MCF 10A (cell line): ENCODE measurements at regions of chr7 and their contacts with region 1.

Region 1: DNA sequence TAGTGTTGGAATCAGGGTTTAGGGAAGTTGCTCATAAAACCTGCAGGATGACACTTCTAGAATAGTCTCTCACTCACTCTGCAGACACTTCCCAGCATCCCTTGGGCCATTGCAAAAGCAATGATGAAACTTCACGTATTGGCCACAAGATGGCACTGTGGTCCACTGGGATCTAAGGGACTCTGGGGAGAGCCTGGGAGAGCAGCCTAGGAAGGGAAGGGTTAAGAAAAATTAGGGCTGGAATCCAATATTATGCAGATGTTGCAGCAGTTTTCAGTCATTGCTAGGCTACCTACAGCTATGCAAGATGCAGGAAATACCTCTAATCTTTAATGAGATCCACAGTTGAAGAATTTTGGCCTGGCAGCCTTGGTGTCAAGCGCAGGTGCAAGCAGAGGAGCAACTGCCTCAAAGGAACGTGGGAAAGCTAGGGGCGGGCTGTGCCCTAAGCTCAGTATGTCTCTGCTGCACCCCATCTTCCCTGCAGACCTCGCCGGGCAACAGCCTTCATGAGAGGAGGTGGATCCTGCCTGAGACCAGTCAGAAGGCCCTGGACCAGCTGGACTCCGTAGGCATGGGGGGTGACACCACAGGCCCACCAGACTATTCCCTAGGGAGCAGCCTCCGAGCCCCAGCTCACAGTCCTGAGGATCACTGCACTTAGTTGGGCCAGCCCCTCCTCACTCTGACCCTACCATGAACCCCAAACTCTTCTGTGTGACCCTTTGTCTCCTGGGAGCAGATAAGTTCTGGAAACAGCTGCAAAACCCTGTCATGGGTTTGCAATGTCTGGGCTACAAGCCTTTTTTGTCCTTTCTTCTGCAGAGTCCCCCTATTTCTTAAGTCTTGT is 127.9 kb upstream of the PRSS58 start:
- DNase-seq: peak; percentile 87
- H3K4me3 Mint-ChIP-seq: no peak overlapping the region
- H3K27ac Mint-ChIP-seq: no peak overlapping the region
- H3K4me1 Mint-ChIP-seq: peaks cover 24% of the 10 kb centered on the region
- H3K27me3 Mint-ChIP-seq: no peaks in the 10 kb centered on the region
- CTCF ChIP-seq: peak; percentile 77

Region 2: DNA sequence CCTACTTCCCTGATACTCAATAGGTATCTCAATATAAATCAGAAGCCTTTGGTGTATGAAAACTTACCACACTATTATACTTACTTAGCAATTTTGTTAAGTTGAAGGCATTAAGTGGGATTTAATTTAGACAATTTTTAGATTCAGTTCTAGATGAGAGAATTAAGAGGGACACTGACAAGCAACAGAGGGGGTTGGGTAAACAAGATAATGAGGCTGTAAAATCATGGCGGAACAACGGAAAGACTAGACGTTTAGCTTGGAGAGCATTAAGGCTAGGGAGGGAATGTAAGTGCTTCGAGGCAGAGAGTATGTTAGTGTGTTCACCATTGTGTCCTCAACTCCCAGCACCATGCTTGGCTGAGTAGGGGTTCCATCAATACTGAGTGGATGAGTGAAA is 755.1 kb before region 1 on chr7:
- CTCF ChIA-PET with region 1: no interaction called
- POLR2A ChIA-PET with region 1: no interaction called
- intact Hi-C with region 1: no loop called
- DNase-seq: no peak
- H3K4me3 Mint-ChIP-seq: no peak overlapping the region
- H3K27ac Mint-ChIP-seq: no peak overlapping the region
- H3K4me1 Mint-ChIP-seq: no peaks in the 10 kb centered on the region
- H3K27me3 Mint-ChIP-seq: no peaks in the 10 kb centered on the region
- CTCF ChIP-seq: no peak

Region 3: GRCh38 chr7:142323706-142324105 is 62.0 kb before region 1 on chr7:
- CTCF ChIA-PET with region 1: interaction called, 3 read pairs
- POLR2A ChIA-PET with region 1: no interaction called
- intact Hi-C with region 1: loop called (anchors 10 kb)
- DNase-seq: peak; percentile 57
- H3K4me3 Mint-ChIP-seq: no peak overlapping the region
- H3K27ac Mint-ChIP-seq: no peak overlapping the region
- H3K4me1 Mint-ChIP-seq: peaks cover 6% of the 10 kb centered on the region
- H3K27me3 Mint-ChIP-seq: peaks cover 39% of the 10 kb centered on the region
- CTCF ChIP-seq: peak; percentile 47

Region 4: DNA sequence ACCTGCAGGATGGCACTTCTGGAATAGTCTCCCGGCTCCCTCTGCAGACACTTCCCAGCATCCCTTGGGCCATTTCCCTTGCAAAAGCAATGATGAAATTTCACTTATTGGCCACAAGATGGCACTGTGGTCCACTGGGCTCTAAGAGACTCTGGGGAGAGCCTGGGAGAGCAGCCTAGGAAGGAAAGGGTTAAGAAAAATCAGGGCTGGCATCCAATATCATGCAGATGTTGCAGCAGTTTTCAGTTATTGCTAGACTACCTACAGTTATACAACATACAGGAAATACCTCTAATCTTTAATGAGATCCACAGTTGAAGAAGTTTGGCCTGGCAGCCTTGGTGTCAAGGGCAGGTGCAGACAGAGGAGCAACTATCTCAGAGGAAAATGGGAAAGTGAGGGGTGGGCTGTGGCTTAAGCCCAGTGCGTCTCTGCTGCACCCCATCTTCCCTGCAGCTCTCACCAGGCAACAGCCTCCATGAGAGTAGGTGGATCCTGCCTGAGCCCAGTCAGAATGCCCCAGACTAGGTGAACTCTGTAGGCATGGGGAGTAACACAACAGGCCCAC is 27.7 kb before region 1 on chr7:
- CTCF ChIA-PET with region 1: interaction called, 160 read pairs
- POLR2A ChIA-PET with region 1: interaction called, 3 read pairs
- intact Hi-C with region 1: no loop called
- DNase-seq: peak; percentile 87
- H3K4me3 Mint-ChIP-seq: peak overlapping the region; percentile 38
- H3K27ac Mint-ChIP-seq: no peak overlapping the region
- H3K4me1 Mint-ChIP-seq: no peaks in the 10 kb centered on the region
- H3K27me3 Mint-ChIP-seq: peaks cover 28% of the 10 kb centered on the region
- CTCF ChIP-seq: peak; percentile 92

Region 5: GRCh38 chr7:142400042-142400533 is 14.4 kb after region 1 on chr7:
- CTCF ChIA-PET with region 1: interaction called, 16 read pairs
- POLR2A ChIA-PET with region 1: no interaction called
- intact Hi-C with region 1: no loop called
- DNase-seq: no peak
- H3K4me3 Mint-ChIP-seq: no peak overlapping the region
- H3K27ac Mint-ChIP-seq: no peak overlapping the region
- H3K4me1 Mint-ChIP-seq: no peaks in the 10 kb centered on the region
- H3K27me3 Mint-ChIP-seq: peaks cover 74% of the 10 kb centered on the region
- CTCF ChIP-seq: no peak

Region 6: DNA sequence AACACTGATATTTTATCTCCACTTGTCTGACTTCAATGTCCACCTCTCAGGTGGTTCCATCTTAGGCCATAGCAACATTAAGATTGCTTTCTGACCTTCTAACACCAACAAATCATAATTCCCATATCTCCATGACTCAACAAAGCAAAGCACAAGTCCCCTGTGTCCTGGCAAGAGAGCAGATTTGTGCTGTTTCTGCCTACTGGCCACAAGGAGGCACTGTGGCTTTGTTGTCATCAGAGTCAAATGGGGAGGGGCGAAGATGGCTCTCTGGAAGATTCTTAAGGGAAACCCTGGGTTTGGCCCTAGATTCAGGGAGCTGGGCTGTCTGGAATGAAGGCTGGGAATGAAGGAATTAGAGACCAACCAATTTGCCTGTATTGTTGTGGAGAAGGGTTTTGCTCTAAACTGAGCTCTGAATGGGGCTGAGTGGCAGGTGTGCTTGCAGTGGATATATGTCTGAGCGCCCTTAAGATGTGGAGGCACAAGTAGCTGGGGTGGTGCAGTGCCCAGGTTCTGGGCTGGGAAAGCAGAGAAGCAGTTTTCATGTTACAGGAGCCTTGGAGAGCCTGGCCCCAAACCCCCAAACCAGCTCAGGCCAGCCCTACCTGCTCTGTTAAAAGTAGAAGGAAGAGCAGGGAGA is 27.0 kb after region 1 on chr7:
- CTCF ChIA-PET with region 1: interaction called, 20 read pairs
- POLR2A ChIA-PET with region 1: no interaction called
- intact Hi-C with region 1: no loop called
- DNase-seq: peak; percentile 66
- H3K4me3 Mint-ChIP-seq: no peak overlapping the region
- H3K27ac Mint-ChIP-seq: no peak overlapping the region
- H3K4me1 Mint-ChIP-seq: no peaks in the 10 kb centered on the region
- H3K27me3 Mint-ChIP-seq: no peaks in the 10 kb centered on the region
- CTCF ChIP-seq: peak; percentile 29

Region 7: DNA sequence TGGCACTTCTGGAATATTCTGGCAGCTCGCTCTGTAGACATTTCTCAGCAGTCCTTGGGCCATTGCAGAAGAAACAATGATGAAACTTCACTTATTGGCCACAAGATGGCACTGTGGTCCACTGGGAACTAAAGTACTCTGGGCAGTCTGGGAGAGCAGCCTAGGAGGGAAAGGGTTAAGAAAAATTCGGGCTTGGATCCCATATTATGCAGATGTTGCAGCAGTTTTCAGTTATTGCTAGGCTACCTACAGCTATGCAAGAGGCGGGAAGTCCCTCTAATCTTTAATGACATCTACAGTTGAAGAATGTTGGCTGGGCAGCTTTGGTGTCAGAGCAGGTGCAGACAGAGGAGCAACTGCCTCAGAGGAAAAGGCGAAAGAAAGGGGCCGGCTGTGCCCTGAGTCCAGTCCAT is 73.8 kb after region 1 on chr7:
- CTCF ChIA-PET with region 1: interaction called, 11 read pairs
- POLR2A ChIA-PET with region 1: no interaction called
- intact Hi-C with region 1: no loop called
- DNase-seq: peak; percentile 82
- H3K4me3 Mint-ChIP-seq: no peak overlapping the region
- H3K27ac Mint-ChIP-seq: no peak overlapping the region
- H3K4me1 Mint-ChIP-seq: peaks cover 10% of the 10 kb centered on the region
- H3K27me3 Mint-ChIP-seq: peaks cover 42% of the 10 kb centered on the region
- CTCF ChIP-seq: peak; percentile 65

Region 8: GRCh38 chr7:142496545-142497041 is 110.9 kb after region 1 on chr7:
- CTCF ChIA-PET with region 1: interaction called, 10 read pairs
- POLR2A ChIA-PET with region 1: no interaction called
- intact Hi-C with region 1: no loop called
- DNase-seq: peak; percentile 63
- H3K4me3 Mint-ChIP-seq: no peak overlapping the region
- H3K27ac Mint-ChIP-seq: no peak overlapping the region
- H3K4me1 Mint-ChIP-seq: peaks cover 26% of the 10 kb centered on the region
- H3K27me3 Mint-ChIP-seq: peaks cover 28% of the 10 kb centered on the region
- CTCF ChIP-seq: peak; percentile 81